GM12878 (cell line): ENCODE measurements at regions of chr4 and their contacts with region 1.

Region 1: DNA sequence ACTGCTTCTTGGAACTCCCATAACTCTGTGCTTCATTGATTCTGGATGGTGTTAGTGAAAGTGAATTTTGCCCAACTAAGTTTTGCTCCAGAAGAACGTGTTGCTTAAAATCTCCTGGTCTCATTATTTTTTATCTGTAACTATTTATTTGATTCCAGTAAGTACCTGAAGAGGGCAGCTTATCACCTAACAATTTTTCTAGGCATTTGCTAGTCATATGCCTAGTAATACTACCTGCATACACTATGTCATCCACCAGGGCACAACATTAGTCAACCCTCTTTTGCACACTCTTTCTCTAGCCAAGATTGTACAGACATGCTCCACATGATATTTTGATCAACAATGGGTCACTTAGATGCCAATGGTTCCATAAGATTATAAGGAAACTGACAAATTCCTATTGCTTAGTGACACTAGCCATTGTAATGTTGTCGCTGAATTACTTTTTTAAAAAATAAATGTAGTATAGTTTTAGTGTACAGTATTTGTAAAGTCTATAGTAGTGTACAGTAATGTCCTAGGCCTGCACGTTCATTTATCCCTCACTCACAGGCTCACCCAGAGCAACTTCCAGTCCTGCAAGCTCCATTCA is 499.9 kb upstream of the AADAT start:
- DNase-seq: peak; percentile 37
- ATAC-seq: peak; percentile 100
- H3K4me3 ChIP-seq: no peak overlapping the region
- H3K27ac ChIP-seq: no peak overlapping the region
- H3K4me1 ChIP-seq: no peaks in the 10 kb centered on the region
- H3K27me3 ChIP-seq: no peaks in the 10 kb centered on the region
- CTCF ChIP-seq: peak; percentile 57 to 64 (median 63)
- EP300 ChIP-seq: no peak
- POLR2A ChIP-seq: no peak
- RAD21 ChIP-seq: peak; percentile 70

Region 2: GRCh38 chr4:170652571-170652970 is 62.9 kb after region 1 on chr4:
- CTCF ChIA-PET with region 1: no interaction called
- POLR2A ChIA-PET with region 1: no interaction called
- RAD21 ChIA-PET with region 1: no interaction called
- SMC1A ChIA-PET with region 1: no interaction called
- in situ Hi-C with region 1: no loop called
- intact Hi-C with region 1: no loop called
- DNase-seq: no peak
- ATAC-seq: no peak
- H3K4me3 ChIP-seq: no peak overlapping the region
- H3K27ac ChIP-seq: no peak overlapping the region
- H3K4me1 ChIP-seq: no peaks in the 10 kb centered on the region
- H3K27me3 ChIP-seq: no peaks in the 10 kb centered on the region
- CTCF ChIP-seq: no peak
- EP300 ChIP-seq: no peak
- POLR2A ChIP-seq: no peak
- RAD21 ChIP-seq: no peak

Region 3: DNA sequence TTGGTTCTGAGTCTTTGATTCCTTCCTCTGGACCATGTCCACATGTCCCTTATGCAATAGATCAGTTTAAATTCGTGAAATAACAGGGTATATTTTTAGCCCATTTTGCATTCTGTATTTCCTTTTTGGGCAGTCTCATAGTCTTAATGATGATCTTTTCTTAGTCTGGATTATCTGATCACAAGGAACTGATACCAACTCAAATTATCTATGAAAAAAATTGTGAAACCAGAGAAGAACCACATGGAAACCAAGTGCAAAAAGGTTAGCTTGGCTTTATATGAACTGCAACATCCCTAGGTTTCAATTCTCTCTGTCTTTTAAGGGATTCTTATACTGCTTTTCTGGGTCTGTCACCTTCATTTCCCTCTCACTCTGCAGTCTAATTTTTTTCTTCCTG is 108.6 kb after region 1 on chr4:
- CTCF ChIA-PET with region 1: no interaction called
- POLR2A ChIA-PET with region 1: no interaction called
- RAD21 ChIA-PET with region 1: no interaction called
- SMC1A ChIA-PET with region 1: interaction called, 3 read pairs
- in situ Hi-C with region 1: no loop called
- intact Hi-C with region 1: loop called (anchors 5 kb)
- DNase-seq: peak; percentile 69
- ATAC-seq: peak; percentile 86
- H3K4me3 ChIP-seq: peak overlapping the region; percentile 44; the same call in 1 of the 2 replicates
- H3K27ac ChIP-seq: peak overlapping the region; percentile 78
- H3K4me1 ChIP-seq: peaks cover 6% of the 10 kb centered on the region
- H3K27me3 ChIP-seq: no peaks in the 10 kb centered on the region
- CTCF ChIP-seq: no peak
- EP300 ChIP-seq: peak; percentile 62 to 80; a peak in 3 of 4 replicates
- POLR2A ChIP-seq: no peak
- RAD21 ChIP-seq: no peak

Region 4: GRCh38 chr4:170716868-170717267 is 127.2 kb after region 1 on chr4:
- CTCF ChIA-PET with region 1: interaction called, 89 read pairs
- POLR2A ChIA-PET with region 1: no interaction called
- RAD21 ChIA-PET with region 1: interaction called, 25 read pairs
- SMC1A ChIA-PET with region 1: interaction called, 29 read pairs
- in situ Hi-C with region 1: no loop called
- intact Hi-C with region 1: loop called (anchors 1 kb)
- DNase-seq: no peak
- ATAC-seq: 0 out of 3 replicates have a peak, but pooled peaks have one; percentile 32
- H3K4me3 ChIP-seq: no peak overlapping the region
- H3K27ac ChIP-seq: no peak overlapping the region
- H3K4me1 ChIP-seq: no peaks in the 10 kb centered on the region
- H3K27me3 ChIP-seq: no peaks in the 10 kb centered on the region
- CTCF ChIP-seq: peak in 2 of 3 experiments; percentile 24 to 36; a peak in 2 of 6 replicates
- EP300 ChIP-seq: no peak
- POLR2A ChIP-seq: no peak
- RAD21 ChIP-seq: peak; percentile 63

Region 5: GRCh38 chr4:171186700-171187099 is 597.0 kb after region 1 on chr4:
- CTCF ChIA-PET with region 1: interaction called, 6 read pairs
- POLR2A ChIA-PET with region 1: no interaction called
- RAD21 ChIA-PET with region 1: no interaction called
- SMC1A ChIA-PET with region 1: no interaction called
- in situ Hi-C with region 1: no loop called
- intact Hi-C with region 1: loop called (anchors 10 kb)
- DNase-seq: no peak
- ATAC-seq: peak; percentile 67
- H3K4me3 ChIP-seq: no peak overlapping the region
- H3K27ac ChIP-seq: no peak overlapping the region
- H3K4me1 ChIP-seq: no peaks in the 10 kb centered on the region
- H3K27me3 ChIP-seq: no peaks in the 10 kb centered on the region
- CTCF ChIP-seq: no peak; a peak in 1 of 6 replicates
- EP300 ChIP-seq: no peak
- POLR2A ChIP-seq: no peak
- RAD21 ChIP-seq: 0 out of 2 replicates have a peak, but pooled peaks have one; percentile 17